Esophagus muscularis mucosa (tissue), 4 donors: ENCODE measurements at regions of chr9 and their contacts with region 1.

Region 1: DNA sequence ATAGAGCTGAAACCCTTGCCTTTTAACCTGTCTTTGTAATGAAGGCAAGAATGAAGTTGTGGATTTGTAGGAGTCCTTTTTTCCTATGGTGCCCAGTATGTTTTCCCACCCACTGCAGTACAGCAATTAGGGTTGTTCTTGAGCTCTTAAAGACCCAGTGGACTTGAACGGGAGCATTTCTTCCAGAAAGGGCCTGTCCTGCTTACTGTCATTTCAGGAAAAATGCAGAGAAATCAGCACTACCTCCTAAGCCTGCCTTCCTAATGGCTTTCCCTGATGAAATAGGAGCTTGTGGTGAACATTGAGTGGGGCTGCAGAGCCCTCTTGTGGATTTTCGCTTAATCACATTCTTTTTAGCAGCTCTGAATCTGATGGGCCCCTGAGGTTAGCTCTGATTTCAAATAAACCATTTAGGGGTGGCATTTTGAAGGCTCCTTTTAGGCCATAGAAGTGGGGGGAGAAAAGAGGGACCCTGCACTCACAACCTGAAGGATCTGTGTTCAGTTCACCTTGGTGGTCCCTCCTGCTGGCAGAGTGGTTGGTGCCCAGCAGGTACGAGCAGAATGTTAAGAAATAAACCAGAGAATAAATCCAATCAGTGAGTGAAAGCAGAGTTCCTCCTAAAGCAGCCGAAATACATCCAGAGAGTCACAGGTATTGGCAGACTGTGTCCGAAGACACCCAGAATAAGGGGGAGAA is 188.0 kb upstream of the KLF9 start:
- DNase-seq: no peak
- H3K4me3 ChIP-seq: peak overlapping the region; percentile 10 to 28 (median 18)
- H3K27ac ChIP-seq: peak overlapping the region; percentile 88 to 91 (median 90)
- H3K4me1 ChIP-seq: peaks cover 26 to 35% (median 33%) of the 10 kb centered on the region in 4 donors
- H3K27me3 ChIP-seq: no peaks in the 10 kb centered on the region
- CTCF ChIP-seq: peak; percentile 75 to 90 (median 80)
- EP300 ChIP-seq: no peak
- POLR2A ChIP-seq: no peak

Region 2: DNA sequence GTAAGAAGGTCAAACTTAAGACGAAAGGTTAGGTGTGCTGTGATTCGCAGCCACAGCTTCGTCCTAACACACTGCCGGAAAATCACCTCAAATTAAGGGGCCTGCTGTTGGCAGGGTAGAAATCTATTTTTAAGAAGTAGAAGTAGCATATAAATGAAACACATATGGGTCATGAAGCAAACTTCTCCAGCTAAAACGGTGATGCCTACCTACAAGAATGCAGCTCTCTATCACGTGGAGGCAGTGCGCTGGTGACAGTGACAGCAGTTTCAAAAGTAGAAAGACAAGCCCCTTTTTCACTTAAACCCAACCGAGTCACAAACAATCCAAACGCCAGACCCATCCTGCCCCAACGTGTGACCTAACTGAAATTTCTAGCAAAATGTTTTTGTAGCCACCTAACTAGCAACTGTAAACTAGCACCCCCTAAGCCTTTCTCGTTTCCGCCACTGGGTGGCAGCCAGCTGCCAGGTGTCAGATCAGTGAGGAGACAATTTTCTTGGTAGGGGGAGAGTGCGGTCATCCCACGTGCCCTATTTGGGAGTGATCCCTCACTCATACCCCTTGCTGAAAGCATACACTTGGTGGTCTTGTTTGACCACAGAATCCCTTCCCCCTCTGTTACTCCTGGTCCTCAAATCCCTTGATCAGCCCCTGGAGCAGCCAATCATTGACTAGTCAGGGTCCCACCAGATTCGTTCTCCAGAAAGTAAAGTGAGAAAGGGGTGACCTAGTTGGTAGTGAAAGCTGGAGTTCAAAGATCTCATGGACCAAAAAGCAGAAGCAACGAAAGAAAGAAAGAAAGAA is 630.6 kb before region 1 on chr9:
- intact Hi-C with region 1: loop called (anchors 10 kb)
- DNase-seq: no peak
- H3K4me3 ChIP-seq: peak overlapping the region in 1 of 4 donors; percentile 11
- H3K27ac ChIP-seq: peak overlapping the region in 2 of 4 donors; percentile 12 to 31
- H3K4me1 ChIP-seq: peaks cover 0 to 31% (median 13%) of the 10 kb centered on the region in 4 donors
- H3K27me3 ChIP-seq: no peaks in the 10 kb centered on the region
- CTCF ChIP-seq: peak; percentile 88 to 91 (median 89)
- EP300 ChIP-seq: no peak
- POLR2A ChIP-seq: no peak

Region 3: GRCh38 chr9:70258692-70259511 is 343.6 kb before region 1 on chr9 and contains the start of gene SMC5:
- intact Hi-C with region 1: loop called (anchors 5 kb)
- DNase-seq: peak; percentile 97
- H3K4me3 ChIP-seq: peak within 1 kb of the TSS; percentile 72 to 83 (median 80)
- H3K27ac ChIP-seq: peak within 1 kb of the TSS; percentile 92 to 94 (median 92)
- H3K4me1 ChIP-seq: peaks cover 42 to 71% (median 66%) of the 10 kb centered on the region in 4 donors
- H3K27me3 ChIP-seq: no peaks in the 10 kb centered on the region
- CTCF ChIP-seq: no peak
- EP300 ChIP-seq: no peak
- POLR2A ChIP-seq: peak; percentile 96
- total RNA-seq, gene SMC5: 17.2 to 27.4 (median 17.8) TPM

Region 4: DNA sequence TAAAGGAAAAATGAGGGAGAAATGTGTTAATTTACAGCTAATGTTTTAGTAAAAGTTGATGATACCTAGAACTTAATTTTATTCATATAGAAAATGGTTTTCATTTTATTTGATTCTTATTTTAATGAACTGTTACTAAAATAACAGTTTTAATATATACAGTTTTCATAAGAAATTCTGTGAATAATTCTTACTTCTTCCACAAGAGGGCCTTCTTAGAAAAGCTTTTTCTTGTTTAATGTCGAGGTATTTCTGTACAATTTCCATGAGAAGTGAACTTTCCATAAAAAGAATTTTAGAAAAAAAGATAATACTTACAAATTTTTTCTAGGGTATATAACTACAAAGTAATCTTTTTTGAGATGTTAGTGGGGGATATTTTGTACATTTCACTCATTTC is 261.9 kb before region 1 on chr9:
- intact Hi-C with region 1: loop called (anchors 2 kb)
- DNase-seq: no peak
- H3K4me3 ChIP-seq: no peak overlapping the region
- H3K27ac ChIP-seq: peak overlapping the region in 1 of 4 donors; percentile 29
- H3K4me1 ChIP-seq: peaks cover 0 to 9% (median 4%) of the 10 kb centered on the region in 4 donors
- H3K27me3 ChIP-seq: no peaks in the 10 kb centered on the region
- CTCF ChIP-seq: peak; percentile 48 to 68 (median 62)
- EP300 ChIP-seq: no peak
- POLR2A ChIP-seq: no peak

Region 5: GRCh38 chr9:70413798-70414775 is 188.4 kb before region 1 on chr9 and contains the start of gene KLF9:
- intact Hi-C with region 1: loop called (anchors 2 kb)
- DNase-seq: peak; percentile 99
- H3K4me3 ChIP-seq: peak within 1 kb of the TSS; percentile 66 to 99 (median 89)
- H3K27ac ChIP-seq: peak within 1 kb of the TSS; percentile 91 to 100 (median 100)
- H3K4me1 ChIP-seq: peaks cover 44 to 55% (median 47%) of the 10 kb centered on the region in 4 donors
- H3K27me3 ChIP-seq: no peaks in the 10 kb centered on the region
- CTCF ChIP-seq: peak in 1 of 3 experiments; percentile 3
- EP300 ChIP-seq: no peak
- POLR2A ChIP-seq: peak; percentile 90
- total RNA-seq, gene KLF9: 143 to 209 (median 184) TPM

Region 6: GRCh38 chr9:70419546-70420266 is 182.8 kb before region 1 on chr9:
- intact Hi-C with region 1: loop called (anchors 2 kb)
- DNase-seq: peak; percentile 100
- H3K4me3 ChIP-seq: peak overlapping the region; percentile 54 to 69 (median 56)
- H3K27ac ChIP-seq: peak overlapping the region; percentile 91 to 100 (median 100)
- H3K4me1 ChIP-seq: peaks cover 54 to 78% (median 62%) of the 10 kb centered on the region in 4 donors
- H3K27me3 ChIP-seq: no peaks in the 10 kb centered on the region
- CTCF ChIP-seq: peak in 1 of 3 experiments; percentile 29
- EP300 ChIP-seq: no peak
- POLR2A ChIP-seq: peak; percentile 88

Region 7: GRCh38 chr9:70480405-70480980 is 122.0 kb before region 1 on chr9:
- intact Hi-C with region 1: loop called (anchors 2 kb)
- DNase-seq: peak; percentile 98
- H3K4me3 ChIP-seq: peak overlapping the region; percentile 28 to 39 (median 28)
- H3K27ac ChIP-seq: peak overlapping the region; percentile 85 to 97 (median 96)
- H3K4me1 ChIP-seq: peaks cover 84 to 100% (median 95%) of the 10 kb centered on the region in 4 donors
- H3K27me3 ChIP-seq: no peaks in the 10 kb centered on the region
- CTCF ChIP-seq: no peak
- EP300 ChIP-seq: peak; percentile 99
- POLR2A ChIP-seq: peak; percentile 36